ENCODE measurements at regions of chr5 and their contacts with region 1.

Region 1: DNA sequence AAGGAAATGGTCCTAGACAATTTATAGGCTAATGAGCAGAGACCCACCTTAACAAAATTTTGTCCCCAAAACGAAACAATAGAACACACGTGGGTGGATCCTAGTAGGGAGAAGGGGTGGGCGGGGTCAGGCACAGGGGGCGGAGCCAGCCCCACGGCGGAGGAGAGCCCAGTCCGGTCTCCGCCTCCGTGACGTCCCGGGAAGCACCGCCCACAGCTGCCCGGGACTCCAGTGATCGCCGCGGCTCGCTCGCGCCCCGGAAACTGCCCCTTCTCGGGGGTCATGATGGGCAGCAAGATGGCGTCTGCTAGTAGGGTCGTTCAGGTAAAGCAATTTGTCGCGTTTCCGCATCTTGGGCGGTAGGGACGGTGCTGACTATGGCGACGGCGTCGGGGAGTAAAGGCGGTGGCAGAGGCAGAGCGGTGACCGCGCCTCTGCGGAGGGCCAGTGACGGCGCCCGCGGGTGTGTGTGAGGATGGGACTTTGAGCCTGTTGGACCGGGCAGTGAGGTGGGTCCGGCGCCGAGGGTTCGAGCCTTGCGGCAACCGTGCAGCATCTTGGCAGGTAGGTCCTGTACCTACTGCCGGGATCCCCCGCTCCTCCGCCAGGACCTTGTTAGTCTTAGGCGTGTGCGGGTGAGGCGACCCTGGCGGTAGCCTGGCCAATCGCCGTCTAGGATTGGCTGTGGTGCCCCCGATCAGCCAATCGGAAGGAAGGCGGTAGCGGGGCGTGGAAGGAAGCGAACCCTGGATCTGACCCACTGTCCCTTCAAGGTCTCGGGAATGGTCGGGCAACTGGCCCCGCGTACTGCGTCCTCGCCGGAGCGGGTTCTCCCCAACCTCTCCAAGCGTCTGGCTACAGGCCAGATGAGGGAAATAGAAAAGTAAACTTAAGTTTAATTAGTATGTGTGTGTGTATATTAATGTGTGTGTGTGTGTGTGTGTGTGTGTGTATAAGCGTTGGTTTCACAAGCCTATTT is 16.8 kb upstream of the CDK7 start:
- DNase-seq: peak; percentile 85 to 99 (median 94)
- ATAC-seq: peak; percentile 91
- H3K4me3 ChIP-seq: peak overlapping the region; percentile 89
- H3K4me3 Mint-ChIP-seq: peak overlapping the region; percentile 95
- H3K27ac ChIP-seq: peak overlapping the region; percentile 88 to 93
- H3K27ac Mint-ChIP-seq: peak overlapping the region; percentile 98
- H3K4me1 ChIP-seq: peaks cover 5% of the 10 kb centered on the region
- H3K4me1 Mint-ChIP-seq: peaks cover 36% of the 10 kb centered on the region
- H3K27me3 ChIP-seq: no peaks in the 10 kb centered on the region
- H3K27me3 Mint-ChIP-seq: no peaks in the 10 kb centered on the region
- CTCF ChIP-seq: no peak

Region 2: GRCh38 chr5:69166686-69167492 is 50.9 kb before region 1 on chr5 and contains the start of gene CCNB1:
- CTCF ChIA-PET with region 1: no interaction called
- POLR2A ChIA-PET with region 1: no interaction called
- intact Hi-C with region 1: loop called (anchors 1 to 10 kb)
- DNase-seq: peak; percentile 92 to 98 (median 96)
- ATAC-seq: peak; percentile 100
- H3K4me3 ChIP-seq: peak within 1 kb of the TSS; percentile 80
- H3K4me3 Mint-ChIP-seq: peak within 1 kb of the TSS; percentile 93
- H3K27ac ChIP-seq: peak within 1 kb of the TSS in 1 of 2 donors; percentile 46
- H3K27ac Mint-ChIP-seq: peak within 1 kb of the TSS; percentile 73
- H3K4me1 ChIP-seq: peaks cover 16% of the 10 kb centered on the region
- H3K4me1 Mint-ChIP-seq: peaks cover 23% of the 10 kb centered on the region
- H3K27me3 ChIP-seq: no peaks in the 10 kb centered on the region
- H3K27me3 Mint-ChIP-seq: no peaks in the 10 kb centered on the region
- CTCF ChIP-seq: no peak
- total RNA-seq, gene CCNB1: 1.4 to 1.5 TPM

Measured in CD4-positive, alpha-beta T cell (primary cell).